Sciatic nerve (tissue), 2 donors: ENCODE measurements at regions of chr4 and their contacts with region 1.

Region 1: DNA sequence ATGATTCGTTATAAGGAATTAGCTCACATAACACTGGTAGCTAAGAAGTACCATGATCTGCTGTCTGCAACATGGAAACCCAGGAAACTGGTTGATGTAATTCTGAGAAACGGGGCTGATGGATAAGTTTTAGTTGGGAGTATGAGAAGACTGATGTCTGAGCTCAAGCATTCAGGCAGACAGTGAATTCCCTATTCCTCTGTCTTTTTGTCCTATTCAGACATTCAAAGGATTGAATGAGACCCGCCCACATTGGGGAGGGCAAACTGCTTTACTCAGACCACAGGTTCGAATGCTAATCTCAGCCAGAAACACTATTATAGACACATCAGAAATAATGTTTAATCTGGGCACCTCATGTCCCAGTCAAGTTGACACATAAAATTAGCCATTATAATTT is 515.5 kb downstream of the STPG2 start:
- DNase-seq: no peak
- ATAC-seq: no peak

Region 2: GRCh38 chr4:96375367-96375766 is 1252.4 kb before region 1 on chr4:
- intact Hi-C with region 1: loop called (anchors 5 kb)
- DNase-seq: no peak
- ATAC-seq: no peak

Region 3: DNA sequence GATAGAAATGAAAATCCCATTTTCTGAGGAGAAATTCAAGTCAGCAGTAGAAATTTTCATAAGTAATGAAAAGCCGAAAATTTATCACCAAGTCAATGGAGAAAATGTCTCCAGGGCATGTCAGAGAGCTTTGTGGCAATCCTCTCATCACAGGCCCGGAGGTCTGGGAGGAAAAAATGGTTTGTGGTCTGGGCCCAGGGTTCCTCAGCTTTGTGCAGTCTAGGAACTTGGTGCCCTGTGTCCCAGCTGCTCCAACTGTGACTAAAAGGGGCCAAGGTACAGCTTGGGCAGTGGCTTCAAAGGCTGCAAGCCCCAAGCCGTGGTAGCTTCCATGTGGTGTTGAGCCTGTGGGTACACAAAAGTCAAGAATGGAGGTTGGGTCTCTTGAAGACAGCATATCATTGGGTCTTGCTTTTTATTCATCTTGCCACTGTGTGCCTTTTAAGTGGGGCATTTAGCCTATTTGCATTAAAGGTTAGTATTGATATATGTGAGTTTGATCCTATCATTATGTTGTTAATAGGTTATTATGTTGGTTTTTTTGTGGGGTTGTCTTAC is 1179.4 kb before region 1 on chr4:
- intact Hi-C with region 1: no loop called
- DNase-seq: no peak
- ATAC-seq: no peak